Aorta (tissue), 5 donors: ENCODE measurements at regions of chr12 and their contacts with region 1.

Region 1: DNA sequence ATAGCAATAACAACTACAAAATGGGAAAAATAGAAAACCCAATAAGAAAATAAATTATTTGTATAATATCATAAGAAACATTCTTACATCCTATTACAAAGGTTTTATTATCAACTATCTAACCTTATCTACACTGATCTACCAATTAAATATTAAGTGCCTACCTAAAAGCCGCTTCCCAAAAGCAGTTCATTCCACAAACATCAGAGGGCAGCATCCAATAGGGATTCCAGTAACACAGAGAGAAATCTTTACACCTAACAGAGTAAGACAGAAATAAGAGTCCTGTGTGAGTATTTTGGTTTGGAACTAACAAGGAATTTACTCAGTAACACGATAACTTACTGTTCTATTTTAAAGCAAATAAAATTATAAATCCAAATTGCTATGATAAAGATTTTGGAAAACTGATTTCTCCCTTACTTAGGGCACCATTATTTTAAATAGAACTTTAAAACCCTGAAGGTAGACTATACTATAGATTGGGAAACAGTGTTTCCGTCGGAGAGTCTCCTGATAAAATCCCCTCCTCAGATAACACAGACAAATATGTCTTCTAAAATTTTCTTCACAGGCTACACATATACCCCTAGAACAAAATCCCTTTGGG is 15.0 kb downstream of the GXYLT1 start:
- DNase-seq: no peak
- ATAC-seq: peak; percentile 81
- H3K4me3 ChIP-seq: no peak overlapping the region
- H3K27ac ChIP-seq: no peak overlapping the region
- H3K4me1 ChIP-seq: peaks cover 0 to 3% of the 10 kb centered on the region in 2 donors
- H3K27me3 ChIP-seq: no peaks in the 10 kb centered on the region

Region 2: GRCh38 chr12:41819948-41820347 is 309.8 kb before region 1 on chr12:
- intact Hi-C with region 1: no loop called
- DNase-seq: no peak
- ATAC-seq: no peak
- H3K4me3 ChIP-seq: no peak overlapping the region
- H3K27ac ChIP-seq: no peak overlapping the region
- H3K4me1 ChIP-seq: no peaks in the 10 kb centered on the region
- H3K27me3 ChIP-seq: no peaks in the 10 kb centered on the region

Region 3: DNA sequence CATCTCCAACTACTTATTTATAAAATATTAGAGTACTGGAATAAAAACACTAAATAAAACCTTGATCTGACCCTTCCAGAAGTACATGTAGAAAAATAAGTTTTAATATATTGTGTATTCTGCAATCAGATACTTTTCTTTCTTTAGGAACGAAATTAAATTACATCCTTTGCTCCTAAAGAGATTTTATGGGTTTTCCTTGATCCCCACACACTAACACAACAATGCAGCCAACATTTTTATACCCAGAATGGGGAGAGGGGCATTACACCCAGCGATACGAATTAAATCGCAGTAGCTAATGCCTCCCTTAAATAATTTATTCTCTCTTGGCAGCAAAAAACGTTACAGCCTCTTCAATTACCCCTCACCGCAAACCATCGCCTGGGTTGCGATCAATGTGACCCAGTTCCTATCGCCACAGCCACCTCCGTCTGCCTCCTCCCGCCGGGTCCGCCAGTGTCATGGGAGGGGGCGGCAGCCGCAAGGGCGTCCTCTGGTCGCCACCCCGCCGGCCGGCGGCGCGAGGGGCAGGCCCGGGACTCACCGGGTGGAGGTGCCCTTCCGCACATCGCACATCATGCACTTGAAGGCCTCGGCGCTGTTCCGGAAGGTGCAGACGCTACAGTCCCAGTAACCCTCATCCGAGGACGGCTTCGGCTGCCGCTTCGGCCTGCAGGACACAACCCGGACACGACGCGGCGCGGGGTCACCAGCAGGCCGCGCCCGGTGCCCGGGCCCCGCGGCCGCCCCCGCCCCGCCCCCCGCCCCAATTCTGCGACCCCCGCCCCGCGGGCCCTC is 107.6 kb after region 1 on chr12:
- intact Hi-C with region 1: loop called in 1 of 2 experiments (anchors 5 kb)
- DNase-seq: peak; percentile 86 to 90
- ATAC-seq: peak; percentile 73
- H3K4me3 ChIP-seq: peak overlapping the region; percentile 99 to 100
- H3K27ac ChIP-seq: peak overlapping the region; percentile 9 to 99
- H3K4me1 ChIP-seq: peaks cover 0 to 5% of the 10 kb centered on the region in 2 donors
- H3K27me3 ChIP-seq: no peaks in the 10 kb centered on the region

Region 4: DNA sequence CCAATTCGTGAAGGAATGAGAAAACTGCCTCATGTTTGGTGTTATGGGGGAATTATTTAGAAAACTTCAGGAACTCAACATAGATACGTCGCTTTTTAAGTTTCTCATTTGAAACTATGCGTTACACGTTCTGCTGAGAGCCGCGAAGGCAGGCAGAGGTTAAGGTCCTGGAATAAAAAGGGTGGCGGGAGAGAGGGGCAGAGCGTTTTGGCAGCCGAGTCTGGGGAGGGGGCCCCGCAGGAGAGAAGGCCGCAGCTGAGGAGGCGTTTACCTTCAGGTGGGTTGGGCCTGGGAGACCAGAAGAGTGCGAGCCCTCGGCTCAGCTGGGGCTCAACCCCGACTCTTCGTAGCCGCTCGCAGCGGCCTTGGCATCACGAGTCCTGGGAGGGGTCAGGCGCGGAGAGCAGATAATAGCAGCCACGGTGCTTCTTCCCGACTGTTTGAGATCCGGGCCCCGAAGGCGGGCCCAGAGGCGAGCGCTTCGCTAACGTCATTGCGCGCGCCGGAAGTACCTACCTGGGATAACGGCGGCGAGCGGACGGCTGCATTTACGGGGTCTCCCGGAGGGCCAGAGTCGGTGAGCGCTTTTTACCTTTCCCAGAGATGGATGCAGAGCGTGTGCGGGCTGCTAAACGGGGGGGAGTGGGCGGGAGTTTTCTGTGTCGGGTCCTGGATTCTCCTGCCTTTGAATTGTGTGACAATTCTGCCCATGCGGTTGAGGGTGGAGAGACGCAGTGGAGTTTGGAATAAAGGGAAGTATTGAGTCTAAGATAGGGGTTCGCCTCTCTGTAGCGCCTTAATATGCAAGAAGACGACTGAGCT is 196.2 kb after region 1 on chr12 and contains the starts of genes PPHLN1 and ZCRB1:
- intact Hi-C with region 1: loop called in 1 of 2 experiments (anchors 5 kb)
- DNase-seq: peak; percentile 88 to 94
- ATAC-seq: peak; percentile 95
- H3K4me3 ChIP-seq: peak within 1 kb of the TSS; percentile 82 to 97
- H3K27ac ChIP-seq: peak within 1 kb of the TSS; percentile 44 to 88
- H3K4me1 ChIP-seq: peaks cover 6 to 7% of the 10 kb centered on the region in 2 donors
- H3K27me3 ChIP-seq: no peaks in the 10 kb centered on the region
- total RNA-seq, gene PPHLN1: 50.0 to 52.8 TPM
- total RNA-seq, gene ZCRB1: 36.2 to 44.4 TPM

Region 5: GRCh38 chr12:42332301-42333285 is 202.9 kb after region 1 on chr12:
- intact Hi-C with region 1: loop called (anchors 2 to 5 kb)
- DNase-seq: no peak
- ATAC-seq: no peak
- H3K4me3 ChIP-seq: no peak overlapping the region
- H3K27ac ChIP-seq: no peak overlapping the region
- H3K4me1 ChIP-seq: peaks cover 0 to 2% of the 10 kb centered on the region in 2 donors
- H3K27me3 ChIP-seq: no peaks in the 10 kb centered on the region

Region 6: DNA sequence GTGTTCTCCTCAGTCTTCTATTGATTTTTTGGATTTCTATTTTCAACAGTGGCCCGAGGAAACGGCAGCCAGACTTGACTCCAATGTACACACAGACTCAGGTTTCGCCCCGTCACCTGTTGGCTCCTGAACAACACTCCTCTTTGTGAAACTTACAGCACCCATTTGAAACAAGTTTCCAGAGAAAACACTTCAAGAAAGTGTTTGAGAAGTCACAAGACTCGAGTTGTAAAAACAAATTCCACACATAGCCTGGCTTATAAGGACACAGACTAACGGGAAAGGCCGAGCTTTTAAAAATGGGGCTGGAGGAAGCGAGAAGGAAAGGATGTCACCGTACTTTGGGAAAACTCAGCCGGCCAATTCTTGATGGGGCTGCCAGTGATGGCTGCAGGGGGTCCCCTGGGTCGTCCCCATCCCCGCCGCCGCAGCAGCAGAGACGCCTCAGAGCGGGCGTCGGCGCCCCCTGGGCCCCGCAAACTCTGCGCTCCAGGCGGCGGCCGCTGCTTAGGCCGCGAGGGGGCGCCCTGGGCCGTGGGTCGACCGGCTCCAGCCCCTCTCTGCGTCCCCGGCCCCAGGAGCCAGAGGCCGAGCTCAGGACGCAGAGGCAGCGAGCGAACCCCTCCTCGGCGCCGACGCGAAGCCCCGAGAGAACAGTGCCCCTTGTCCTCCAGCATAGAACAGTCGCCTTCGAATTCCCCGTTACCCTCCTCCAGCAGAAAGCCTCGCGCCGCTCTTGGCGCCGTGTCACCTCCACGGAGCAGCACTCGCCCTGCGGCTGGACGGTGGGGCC is 352.9 kb after region 1 on chr12:
- intact Hi-C with region 1: loop called in 1 of 2 experiments (anchors 10 kb)
- DNase-seq: peak; percentile 81 to 94
- ATAC-seq: peak; percentile 94
- H3K4me3 ChIP-seq: peak overlapping the region; percentile 77 to 95
- H3K27ac ChIP-seq: peak overlapping the region in 1 of 2 donors; percentile 77
- H3K4me1 ChIP-seq: no peaks in the 10 kb centered on the region
- H3K27me3 ChIP-seq: no peaks in the 10 kb centered on the region

Region 7: GRCh38 chr12:42568952-42569915 is 439.5 kb after region 1 on chr12:
- intact Hi-C with region 1: loop called (anchors 10 kb)
- DNase-seq: no peak
- ATAC-seq: peak; percentile 57
- H3K4me3 ChIP-seq: no peak overlapping the region
- H3K27ac ChIP-seq: no peak overlapping the region
- H3K4me1 ChIP-seq: peaks cover 0 to 2% of the 10 kb centered on the region in 2 donors
- H3K27me3 ChIP-seq: no peaks in the 10 kb centered on the region

Region 8: DNA sequence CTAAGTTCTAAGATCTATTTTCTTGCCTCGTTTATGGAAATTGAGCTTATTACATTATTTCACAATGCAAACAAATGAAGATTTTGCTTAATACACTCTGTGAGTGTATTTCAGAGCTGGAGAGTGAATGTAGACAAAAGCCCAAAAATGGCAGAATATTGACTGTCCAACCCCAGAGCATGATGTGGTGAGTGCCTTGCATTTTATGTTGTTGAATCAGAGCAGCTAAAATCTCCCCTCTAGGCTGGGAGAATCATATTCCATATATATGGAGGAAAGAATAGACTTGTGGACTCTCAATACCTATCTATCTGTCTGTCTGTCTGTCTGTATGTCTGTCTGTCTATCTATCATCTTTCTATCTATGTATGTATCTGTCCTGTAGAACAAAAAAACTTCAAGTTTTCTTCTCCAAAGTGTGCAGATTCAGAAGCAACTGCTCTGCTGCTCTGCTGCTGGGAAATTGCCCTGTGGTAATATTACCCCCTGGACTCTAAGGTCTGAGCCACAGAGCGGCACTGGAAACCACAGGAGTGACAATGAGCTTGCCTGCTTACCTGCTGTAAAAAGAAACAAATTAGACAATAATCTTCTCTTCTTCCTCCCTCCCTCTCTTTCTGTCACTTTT is 669.2 kb after region 1 on chr12:
- intact Hi-C with region 1: no loop called
- DNase-seq: no peak
- ATAC-seq: no peak
- H3K4me3 ChIP-seq: no peak overlapping the region
- H3K27ac ChIP-seq: no peak overlapping the region
- H3K4me1 ChIP-seq: no peaks in the 10 kb centered on the region
- H3K27me3 ChIP-seq: no peaks in the 10 kb centered on the region